Activated CD4-positive, alpha-beta T cell treated with anti-CD3 and anti-CD28 coated beads, Interleukin-2, amount 10 ng/mL, durations not matched to agents 24 days and 14 days (primary cell): ENCODE measurements at regions of chr11 and their contacts with region 1.

Region 1: GRCh38 chr11:96155627-96156378 is 187.2 kb downstream of the MAML2 start:
- DNase-seq: peak; percentile 79
- H3K4me3 Mint-ChIP-seq: peak overlapping the region; percentile 65
- H3K27ac Mint-ChIP-seq: peak overlapping the region; percentile 95
- H3K4me1 Mint-ChIP-seq: peaks cover 54% of the 10 kb centered on the region
- H3K27me3 Mint-ChIP-seq: no peaks in the 10 kb centered on the region

Region 2: GRCh38 chr11:95923728-95924413 is 231.9 kb before region 1 on chr11 and contains the start of gene MTMR2:
- intact Hi-C with region 1: loop called (anchors 1 kb)
- DNase-seq: peak; percentile 86
- H3K4me3 Mint-ChIP-seq: peak within 1 kb of the TSS; percentile 99
- H3K27ac Mint-ChIP-seq: peak within 1 kb of the TSS; percentile 96
- H3K4me1 Mint-ChIP-seq: peaks cover 24% of the 10 kb centered on the region
- H3K27me3 Mint-ChIP-seq: peaks cover 12% of the 10 kb centered on the region
- total RNA-seq, gene MTMR2: 37.5 and 38.4 TPM in 2 replicates